GM10248 (cell line): ENCODE measurements at regions of chr17 and their contacts with region 1.

Region 1: DNA sequence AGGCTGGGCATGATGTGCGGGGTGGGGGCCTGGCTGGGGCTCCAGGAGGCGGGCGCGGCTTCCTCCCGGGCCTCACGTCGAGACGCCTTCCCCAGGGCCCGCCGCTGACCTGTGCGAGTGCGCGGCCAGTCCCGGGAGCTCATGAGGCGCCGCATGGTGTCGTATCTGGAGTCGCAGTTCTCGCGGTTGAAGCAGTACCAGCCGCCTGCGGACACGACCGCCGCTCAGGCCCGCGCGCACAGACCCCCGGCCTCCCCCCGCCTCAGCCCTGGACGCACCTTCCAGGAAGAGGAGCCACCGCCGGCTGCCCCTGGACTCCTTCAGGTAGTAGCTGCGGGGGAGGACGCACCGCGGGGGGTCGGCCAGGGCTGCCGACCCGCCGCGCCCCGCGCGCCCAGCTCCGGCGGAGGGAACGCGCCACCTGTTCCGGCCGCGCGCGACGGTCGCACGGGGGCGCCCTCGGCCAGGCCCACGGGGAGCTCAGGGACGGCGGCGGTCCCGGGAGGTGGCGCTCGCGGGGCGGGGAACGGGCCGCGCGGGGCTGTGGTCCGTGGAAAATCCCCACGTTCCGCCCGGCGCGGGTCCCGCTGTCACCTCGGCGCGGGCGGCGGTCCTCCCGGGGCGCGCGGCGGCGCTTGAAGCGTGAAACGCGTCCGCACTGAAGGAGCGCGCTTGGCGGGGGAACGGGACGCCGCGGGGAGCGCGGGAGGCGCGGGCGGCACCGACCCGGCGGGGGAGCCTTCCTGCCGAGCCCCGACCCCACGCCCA is 1.4 kb downstream of the NOTUM start:
- DNase-seq: peak; percentile 89
- CTCF ChIP-seq: peak; percentile 100

Region 2: GRCh38 chr17:81948635-81949378 is 10.7 kb before region 1 on chr17:
- CTCF ChIA-PET with region 1: interaction called, 19 read pairs
- POLR2A ChIA-PET with region 1: no interaction called
- DNase-seq: no peak
- CTCF ChIP-seq: no peak

Region 3: GRCh38 chr17:82022981-82023374 is 63.4 kb after region 1 on chr17 and contains the start of gene LRRC45:
- CTCF ChIA-PET with region 1: interaction called, 106 read pairs
- POLR2A ChIA-PET with region 1: no interaction called
- DNase-seq: peak; percentile 99
- CTCF ChIP-seq: no peak

Region 4: DNA sequence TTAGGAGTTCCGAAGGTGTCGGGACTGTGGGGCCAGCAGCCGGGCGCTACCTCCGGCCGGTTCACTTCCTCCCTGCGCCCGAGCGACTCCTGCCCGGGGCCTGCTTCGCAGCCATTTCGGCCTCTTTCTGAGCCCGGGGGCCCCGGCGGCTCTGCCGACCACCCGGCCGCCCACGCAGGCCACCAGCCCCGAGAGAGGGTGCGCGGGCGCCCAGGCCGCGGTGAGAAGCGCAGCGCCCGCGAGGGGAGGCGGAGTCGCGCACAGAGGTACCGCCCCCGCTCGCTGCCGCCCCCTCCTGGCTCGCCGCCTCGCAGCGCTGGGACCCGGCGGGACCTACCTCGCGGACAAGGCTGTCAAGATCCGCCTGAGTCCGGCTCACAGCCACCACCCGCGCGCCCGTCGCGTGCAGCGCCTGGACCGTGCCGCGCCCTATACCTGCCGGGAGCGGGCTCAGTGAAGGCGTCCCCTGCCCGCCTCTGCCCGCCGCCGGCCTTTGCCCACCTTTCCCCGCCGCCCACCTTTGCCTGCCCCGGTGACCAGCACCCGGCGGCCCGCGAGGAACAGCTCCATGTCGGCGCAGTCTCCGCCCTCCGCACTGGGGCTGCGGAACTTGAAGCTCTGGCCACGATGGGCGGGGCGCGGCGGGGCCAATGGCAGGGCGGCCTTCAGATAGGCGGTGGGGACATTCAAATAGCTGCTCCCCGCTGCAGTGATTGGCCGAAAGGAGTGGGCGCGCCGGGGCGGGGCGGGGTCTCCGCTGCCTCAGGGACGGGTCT is 77.8 kb after region 1 on chr17 and contains the start of gene DCXR:
- CTCF ChIA-PET with region 1: interaction called, 10 read pairs
- POLR2A ChIA-PET with region 1: no interaction called
- DNase-seq: peak; percentile 98
- CTCF ChIP-seq: peak; percentile 93